Activated CD4-positive, alpha-beta T cell treated with anti-CD3 and anti-CD28 coated beads, Interleukin-2, amount 10 ng/mL, durations not matched to agents 24 days and 14 days (primary cell): ENCODE measurements at regions of chr9 and their contacts with region 1.

Region 1: GRCh38 chr9:33466565-33467495 is 6.9 kb downstream of the NOL6 start:
- DNase-seq: peak; percentile 94
- H3K4me3 Mint-ChIP-seq: no peak overlapping the region
- H3K27ac Mint-ChIP-seq: no peak overlapping the region
- H3K4me1 Mint-ChIP-seq: peaks cover 6% of the 10 kb centered on the region
- H3K27me3 Mint-ChIP-seq: no peaks in the 10 kb centered on the region

Region 2: DNA sequence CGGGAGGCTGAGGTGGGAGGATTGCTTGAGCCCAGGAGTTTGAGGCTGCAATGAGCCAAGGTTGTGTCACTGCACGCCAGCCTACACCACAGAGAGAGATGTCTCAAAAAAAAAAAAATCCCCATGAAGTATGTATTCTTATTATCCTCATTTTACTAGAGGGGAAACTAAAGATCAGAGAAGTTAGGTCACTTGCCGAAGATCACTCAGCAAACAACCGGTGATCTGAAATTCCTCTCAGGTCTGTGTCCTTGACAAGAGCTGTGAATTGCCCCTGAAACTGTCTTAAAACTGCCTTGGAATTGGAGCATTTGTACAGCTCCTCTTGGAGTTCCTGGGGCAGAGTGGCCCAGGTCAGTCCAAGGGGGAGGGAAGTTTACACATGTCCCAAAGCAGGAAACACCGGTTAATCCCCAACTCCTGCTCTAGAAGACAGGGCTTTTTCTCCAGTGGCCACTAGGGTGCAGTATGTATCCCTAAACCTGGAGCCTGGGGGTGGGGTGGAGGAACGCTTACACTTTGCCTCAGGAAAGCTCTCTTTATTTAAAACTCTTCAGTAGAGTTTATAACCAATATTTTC is 92.1 kb before region 1 on chr9:
- intact Hi-C with region 1: loop called (anchors 2 kb)
- DNase-seq: peak; percentile 91
- H3K4me3 Mint-ChIP-seq: peak overlapping the region; percentile 30
- H3K27ac Mint-ChIP-seq: peak overlapping the region; percentile 52
- H3K4me1 Mint-ChIP-seq: peaks cover 10% of the 10 kb centered on the region
- H3K27me3 Mint-ChIP-seq: no peaks in the 10 kb centered on the region

Region 3: DNA sequence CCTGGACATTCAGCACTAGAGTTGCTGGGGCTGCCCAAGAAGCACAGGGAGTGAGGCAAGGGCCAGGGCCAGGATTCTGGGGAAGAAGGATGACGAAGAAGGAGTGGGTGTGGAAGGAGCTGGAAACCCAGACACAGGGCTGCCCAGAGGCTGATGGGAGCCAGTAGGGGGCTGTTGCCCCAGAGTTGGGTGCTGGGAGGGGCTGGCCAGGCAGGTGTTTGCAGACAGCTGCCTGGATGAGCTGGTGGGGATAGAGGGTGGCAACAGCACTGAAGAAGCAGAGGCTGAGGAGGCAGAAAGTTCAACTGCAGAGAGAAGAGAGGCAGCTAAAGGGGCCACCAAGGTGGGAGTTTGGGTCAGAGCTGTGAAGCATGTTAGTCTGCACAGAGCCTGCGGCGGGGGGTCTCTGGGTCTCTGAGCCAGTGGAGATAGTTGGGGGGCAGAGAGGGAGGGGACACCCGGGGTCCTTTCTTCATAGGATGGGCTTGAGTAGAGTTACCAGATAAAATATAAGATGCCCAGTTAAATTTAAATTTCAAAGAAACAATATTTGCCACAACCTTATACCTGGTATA is 62.0 kb before region 1 on chr9:
- intact Hi-C with region 1: loop called (anchors 1 kb)
- DNase-seq: no peak
- H3K4me3 Mint-ChIP-seq: no peak overlapping the region
- H3K27ac Mint-ChIP-seq: no peak overlapping the region
- H3K4me1 Mint-ChIP-seq: peaks cover 5% of the 10 kb centered on the region
- H3K27me3 Mint-ChIP-seq: peaks cover 6% of the 10 kb centered on the region

Region 4: GRCh38 chr9:33415501-33416038 is 51.3 kb before region 1 on chr9:
- intact Hi-C with region 1: loop called (anchors 2 kb)
- DNase-seq: peak; percentile 98
- H3K4me3 Mint-ChIP-seq: peak overlapping the region; percentile 69
- H3K27ac Mint-ChIP-seq: peak overlapping the region; percentile 94
- H3K4me1 Mint-ChIP-seq: peaks cover 50% of the 10 kb centered on the region
- H3K27me3 Mint-ChIP-seq: peaks cover 2% of the 10 kb centered on the region

Region 5: GRCh38 chr9:33440609-33441008 is 26.2 kb before region 1 on chr9:
- intact Hi-C with region 1: no loop called
- DNase-seq: no peak
- H3K4me3 Mint-ChIP-seq: no peak overlapping the region
- H3K27ac Mint-ChIP-seq: no peak overlapping the region
- H3K4me1 Mint-ChIP-seq: peaks cover 64% of the 10 kb centered on the region
- H3K27me3 Mint-ChIP-seq: no peaks in the 10 kb centered on the region